Sigmoid colon (tissue), 7 donors: ENCODE measurements at regions of chr11 and their contacts with region 1.

Region 1: DNA sequence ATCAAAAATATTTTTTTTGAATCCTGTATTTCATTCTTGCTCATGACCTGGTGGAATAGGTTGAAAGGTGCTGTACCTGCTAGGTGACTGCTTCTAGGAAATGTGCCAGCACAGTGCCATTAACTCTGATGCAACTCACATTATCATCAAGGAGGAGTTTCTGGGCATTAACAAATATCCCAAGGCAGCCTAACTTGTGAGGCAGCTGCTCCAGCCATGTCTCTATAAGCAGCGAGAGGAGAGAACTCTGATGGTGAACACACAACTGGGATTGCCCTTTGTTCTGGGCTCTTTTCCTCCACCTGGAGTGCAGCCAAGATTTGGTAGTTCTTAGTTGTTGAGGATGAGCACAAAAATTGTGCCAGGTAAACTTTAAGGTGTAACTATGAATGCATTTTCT is 25.6 kb downstream of the HEPHL1 start:
- DNase-seq: no peak
- H3K4me3 ChIP-seq: no peak overlapping the region
- H3K27ac ChIP-seq: no peak overlapping the region
- H3K4me1 ChIP-seq: no peaks in the 10 kb centered on the region
- H3K27me3 ChIP-seq: no peaks in the 10 kb centered on the region
- CTCF ChIP-seq: no peak
- EP300 ChIP-seq: no peak
- POLR2A ChIP-seq: no peak

Region 2: DNA sequence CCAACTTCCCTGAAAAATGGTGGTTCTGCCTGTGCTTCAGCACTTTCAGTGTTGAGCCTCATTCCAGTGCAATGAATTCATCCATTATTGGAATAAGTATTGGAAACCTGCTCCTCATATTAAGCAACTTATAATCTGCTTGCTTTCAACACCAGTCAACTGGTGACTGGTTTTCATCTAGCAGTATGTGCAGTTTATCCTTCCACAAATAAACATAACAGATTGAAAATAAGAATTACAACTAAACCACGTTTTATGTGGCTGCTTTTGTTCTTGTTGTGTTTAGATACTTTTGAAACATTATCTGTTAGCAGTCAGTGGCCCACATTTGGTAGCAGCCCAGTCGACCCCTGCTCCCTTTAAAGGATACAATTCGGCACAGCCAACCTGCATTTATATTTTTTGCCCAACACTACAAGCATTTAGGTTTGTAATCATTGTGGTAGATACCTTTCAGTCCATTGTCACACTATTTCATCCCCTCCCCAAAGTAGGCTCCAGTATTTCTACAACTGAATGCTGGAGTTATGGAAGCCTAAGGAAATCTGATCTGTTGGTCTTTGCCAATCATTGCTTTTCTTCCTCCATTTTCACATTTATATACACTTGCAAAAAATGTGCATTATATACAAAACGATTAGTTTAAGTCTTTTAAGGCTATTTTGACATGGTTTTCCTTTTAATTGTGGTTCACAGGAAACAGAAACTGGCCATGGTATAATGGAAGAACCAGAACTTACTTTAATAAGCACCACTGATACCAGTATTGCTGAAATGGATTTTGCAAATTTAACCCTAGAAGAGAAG is 318.6 kb before region 1 on chr11:
- intact Hi-C with region 1: no loop called
- DNase-seq: no peak
- H3K4me3 ChIP-seq: no peak overlapping the region
- H3K27ac ChIP-seq: no peak overlapping the region
- H3K4me1 ChIP-seq: no peaks in the 10 kb centered on the region
- H3K27me3 ChIP-seq: no peaks in the 10 kb centered on the region
- CTCF ChIP-seq: no peak
- EP300 ChIP-seq: no peak
- POLR2A ChIP-seq: no peak

Region 3: GRCh38 chr11:94107363-94107762 is 60.6 kb after region 1 on chr11:
- intact Hi-C with region 1: loop called (anchors 10 kb)
- DNase-seq: no peak
- H3K4me3 ChIP-seq: no peak overlapping the region
- H3K27ac ChIP-seq: no peak overlapping the region
- H3K4me1 ChIP-seq: peaks cover 0 to 11% (median 10%) of the 10 kb centered on the region in 4 donors
- H3K27me3 ChIP-seq: no peaks in the 10 kb centered on the region
- CTCF ChIP-seq: no peak
- EP300 ChIP-seq: no peak
- POLR2A ChIP-seq: no peak

Region 4: DNA sequence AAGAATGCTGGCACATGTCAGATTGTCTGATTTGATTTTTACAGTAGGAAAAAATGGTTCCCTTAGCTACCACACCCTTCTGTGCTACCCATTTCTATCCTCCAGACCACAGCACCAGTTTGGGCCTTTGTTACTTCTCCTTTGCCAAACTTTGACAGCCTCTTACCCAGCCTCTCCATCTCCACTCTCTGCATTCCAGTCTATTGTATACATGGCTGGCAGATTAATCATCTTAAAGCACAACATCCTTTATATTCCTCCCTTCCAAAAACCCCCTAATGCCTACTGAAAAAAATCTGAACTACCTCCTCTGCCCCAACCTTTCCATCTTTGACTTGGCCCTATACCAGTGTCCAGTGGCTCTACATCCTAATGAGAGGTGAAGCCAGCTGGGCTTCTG is 71.1 kb after region 1 on chr11:
- intact Hi-C with region 1: no loop called
- DNase-seq: no peak
- H3K4me3 ChIP-seq: no peak overlapping the region
- H3K27ac ChIP-seq: no peak overlapping the region
- H3K4me1 ChIP-seq: peaks cover 0 to 16% (median 7%) of the 10 kb centered on the region in 4 donors
- H3K27me3 ChIP-seq: no peaks in the 10 kb centered on the region
- CTCF ChIP-seq: no peak
- EP300 ChIP-seq: no peak
- POLR2A ChIP-seq: no peak

Region 5: GRCh38 chr11:94525546-94526324 is 478.9 kb after region 1 on chr11:
- intact Hi-C with region 1: no loop called
- DNase-seq: peak; percentile 82
- H3K4me3 ChIP-seq: no peak overlapping the region
- H3K27ac ChIP-seq: no peak overlapping the region
- H3K4me1 ChIP-seq: peaks cover 0 to 4% (median 0%) of the 10 kb centered on the region in 4 donors
- H3K27me3 ChIP-seq: no peaks in the 10 kb centered on the region
- CTCF ChIP-seq: no peak
- EP300 ChIP-seq: no peak
- POLR2A ChIP-seq: no peak